Calu3 (cell line): ENCODE measurements at regions of chr20 and their contacts with region 1.

Region 1: GRCh38 chr20:1466211-1467081 is at the start of gene NSFL1C:
- DNase-seq: peak; percentile 96
- H3K4me3 Mint-ChIP-seq: peak within 1 kb of the TSS; percentile 68
- H3K27ac Mint-ChIP-seq: peak within 1 kb of the TSS; percentile 98
- H3K4me1 Mint-ChIP-seq: peaks cover 53% of the 10 kb centered on the region
- H3K27me3 Mint-ChIP-seq: no peaks in the 10 kb centered on the region
- CTCF ChIP-seq: peak; percentile 95
- total RNA-seq, gene NSFL1C: 81.0 and 86.3 TPM in 2 replicates

Region 2: GRCh38 chr20:1391640-1392498 is 74.6 kb before region 1 on chr20:
- CTCF ChIA-PET with region 1: interaction called, 11 read pairs
- intact Hi-C with region 1: no loop called
- DNase-seq: no peak
- H3K4me3 Mint-ChIP-seq: peak overlapping the region; percentile 72
- H3K27ac Mint-ChIP-seq: no peak overlapping the region
- H3K4me1 Mint-ChIP-seq: peaks cover 12% of the 10 kb centered on the region
- H3K27me3 Mint-ChIP-seq: peaks cover 11% of the 10 kb centered on the region
- CTCF ChIP-seq: no peak

Region 3: GRCh38 chr20:1669304-1669703 is 202.9 kb after region 1 on chr20:
- CTCF ChIA-PET with region 1: no interaction called
- intact Hi-C with region 1: no loop called
- DNase-seq: no peak
- H3K4me3 Mint-ChIP-seq: no peak overlapping the region
- H3K27ac Mint-ChIP-seq: no peak overlapping the region
- H3K4me1 Mint-ChIP-seq: no peaks in the 10 kb centered on the region
- H3K27me3 Mint-ChIP-seq: no peaks in the 10 kb centered on the region
- CTCF ChIP-seq: no peak